Activated T-helper 1 cell treated with anti-CD3 and anti-CD28 coated beads, Interleukin-12 subunit alpha, Interleukin-12 subunit beta, Interleukin-2, Interleukin-4 antibody, amounts not matched to agents 30 ng/mL and 10 ng/mL and 1 ng/mL, durations not matched to agents 14 hours and 24 hours and 36 hours (primary cell): ENCODE measurements at regions of chr15 and their contacts with region 1.

Region 1: DNA sequence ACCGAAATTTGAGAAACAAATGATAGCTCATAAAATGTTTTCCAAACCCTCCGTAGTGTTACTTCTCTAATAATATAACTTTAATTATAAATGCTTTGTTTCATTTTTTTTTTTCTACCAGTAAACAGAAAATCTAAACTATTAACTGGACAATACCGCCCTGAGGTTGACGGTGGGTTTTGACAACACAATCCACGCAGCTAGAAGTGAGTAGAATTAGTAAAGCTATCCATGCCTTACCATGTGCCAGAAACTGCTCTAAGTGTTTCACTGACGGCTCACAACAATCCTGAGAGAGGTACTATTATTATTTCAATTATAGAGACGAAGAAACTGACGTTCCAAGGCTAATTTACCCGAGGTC is 410 bp downstream of the NDUFAF1 start:
- DNase-seq: no peak
- H3K4me3 Mint-ChIP-seq: peak overlapping the region; percentile 89
- H3K27ac Mint-ChIP-seq: peak overlapping the region; percentile 87
- H3K4me1 Mint-ChIP-seq: peaks cover 13% of the 10 kb centered on the region
- H3K27me3 Mint-ChIP-seq: no peaks in the 10 kb centered on the region

Region 2: GRCh38 chr15:41169781-41170180 is 232.1 kb before region 1 on chr15:
- intact Hi-C with region 1: no loop called
- DNase-seq: no peak
- H3K4me3 Mint-ChIP-seq: no peak overlapping the region
- H3K27ac Mint-ChIP-seq: no peak overlapping the region
- H3K4me1 Mint-ChIP-seq: no peaks in the 10 kb centered on the region
- H3K27me3 Mint-ChIP-seq: peaks cover 4% of the 10 kb centered on the region

Region 3: GRCh38 chr15:41230650-41231533 is 171.0 kb before region 1 on chr15 and contains the starts of genes CHP1 and EXD1:
- intact Hi-C with region 1: loop called (anchors 1 kb)
- DNase-seq: peak; percentile 96
- H3K4me3 Mint-ChIP-seq: peak within 1 kb of the TSS; percentile 92
- H3K27ac Mint-ChIP-seq: peak within 1 kb of the TSS; percentile 89
- H3K4me1 Mint-ChIP-seq: peaks cover 23% of the 10 kb centered on the region
- H3K27me3 Mint-ChIP-seq: no peaks in the 10 kb centered on the region
- total RNA-seq, gene CHP1: 43.5 and 55.2 TPM in 2 replicates
- total RNA-seq, gene EXD1: not detected in 2 replicates

Region 4: GRCh38 chr15:41283653-41284426 is 118.0 kb before region 1 on chr15:
- intact Hi-C with region 1: loop called (anchors 1 kb)
- DNase-seq: peak; percentile 96
- H3K4me3 Mint-ChIP-seq: peak overlapping the region; percentile 97
- H3K27ac Mint-ChIP-seq: peak overlapping the region; percentile 92
- H3K4me1 Mint-ChIP-seq: peaks cover 51% of the 10 kb centered on the region
- H3K27me3 Mint-ChIP-seq: no peaks in the 10 kb centered on the region

Region 5: GRCh38 chr15:41350057-41350717 is 51.7 kb before region 1 on chr15:
- intact Hi-C with region 1: no loop called
- DNase-seq: no peak
- H3K4me3 Mint-ChIP-seq: no peak overlapping the region
- H3K27ac Mint-ChIP-seq: no peak overlapping the region
- H3K4me1 Mint-ChIP-seq: no peaks in the 10 kb centered on the region
- H3K27me3 Mint-ChIP-seq: no peaks in the 10 kb centered on the region

Region 6: GRCh38 chr15:41416742-41417406 is 15.0 kb after region 1 on chr15 and contains the start of gene RTF1:
- intact Hi-C with region 1: loop called (anchors 1 kb)
- DNase-seq: peak; percentile 98
- H3K4me3 Mint-ChIP-seq: peak within 1 kb of the TSS; percentile 93
- H3K27ac Mint-ChIP-seq: peak within 1 kb of the TSS; percentile 96
- H3K4me1 Mint-ChIP-seq: peaks cover 40% of the 10 kb centered on the region
- H3K27me3 Mint-ChIP-seq: no peaks in the 10 kb centered on the region
- total RNA-seq, gene RTF1: 41.0 and 44.7 TPM in 2 replicates

Region 7: DNA sequence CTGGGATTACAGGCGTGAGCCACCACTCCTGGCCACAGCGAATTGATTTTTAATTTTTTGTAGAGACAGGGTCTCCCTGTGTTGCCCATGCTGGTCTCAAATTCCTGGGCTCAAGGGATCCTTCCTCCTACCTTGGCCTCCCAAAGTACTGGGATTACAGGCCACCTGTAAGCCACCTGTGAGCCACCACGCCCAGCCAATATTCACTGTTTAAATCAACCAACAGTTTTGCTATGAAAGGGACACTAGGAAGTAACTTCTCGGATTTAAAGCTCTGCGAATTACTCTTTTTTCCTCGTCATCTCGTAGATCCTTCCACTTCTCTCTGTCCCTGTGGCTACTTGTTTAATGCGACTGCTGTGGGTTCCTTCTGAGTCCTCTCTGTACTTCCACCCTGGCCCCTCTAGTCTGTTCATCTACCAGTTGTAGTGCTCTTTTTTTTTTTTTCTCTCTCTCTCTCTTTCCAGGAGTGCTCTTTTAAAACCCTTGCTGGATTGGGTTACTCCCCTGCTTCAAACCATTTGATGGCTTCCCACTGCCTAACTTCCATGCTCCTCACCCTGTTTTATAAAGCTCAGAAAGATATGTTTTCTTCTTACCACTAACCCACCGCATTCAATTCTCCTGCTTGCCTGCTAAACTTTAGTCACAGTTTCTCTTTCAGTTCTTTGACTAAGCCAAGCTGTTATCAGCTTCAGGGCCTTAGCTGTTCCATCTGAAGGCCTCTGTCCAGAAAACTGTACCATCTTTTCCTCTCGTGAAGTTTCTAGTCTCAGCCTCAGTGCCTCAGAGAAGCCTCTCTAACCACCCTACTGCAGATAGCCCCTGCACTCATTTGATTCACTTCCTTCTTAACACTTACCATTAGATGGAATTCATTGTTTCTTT is 27.4 kb after region 1 on chr15:
- intact Hi-C with region 1: loop called (anchors 1 kb)
- DNase-seq: no peak
- H3K4me3 Mint-ChIP-seq: peak overlapping the region; percentile 66
- H3K27ac Mint-ChIP-seq: peak overlapping the region; percentile 97
- H3K4me1 Mint-ChIP-seq: peaks cover 26% of the 10 kb centered on the region
- H3K27me3 Mint-ChIP-seq: no peaks in the 10 kb centered on the region

Region 8: GRCh38 chr15:41445399-41445798 is 43.5 kb after region 1 on chr15:
- intact Hi-C with region 1: no loop called
- DNase-seq: no peak
- H3K4me3 Mint-ChIP-seq: no peak overlapping the region
- H3K27ac Mint-ChIP-seq: no peak overlapping the region
- H3K4me1 Mint-ChIP-seq: peaks cover 17% of the 10 kb centered on the region
- H3K27me3 Mint-ChIP-seq: no peaks in the 10 kb centered on the region

Region 9: GRCh38 chr15:41530363-41530956 is 128.6 kb after region 1 on chr15:
- intact Hi-C with region 1: no loop called
- DNase-seq: no peak
- H3K4me3 Mint-ChIP-seq: no peak overlapping the region
- H3K27ac Mint-ChIP-seq: no peak overlapping the region
- H3K4me1 Mint-ChIP-seq: no peaks in the 10 kb centered on the region
- H3K27me3 Mint-ChIP-seq: no peaks in the 10 kb centered on the region